ENCODE measurements at regions of chr12 and their contacts with region 1.

Region 1: DNA sequence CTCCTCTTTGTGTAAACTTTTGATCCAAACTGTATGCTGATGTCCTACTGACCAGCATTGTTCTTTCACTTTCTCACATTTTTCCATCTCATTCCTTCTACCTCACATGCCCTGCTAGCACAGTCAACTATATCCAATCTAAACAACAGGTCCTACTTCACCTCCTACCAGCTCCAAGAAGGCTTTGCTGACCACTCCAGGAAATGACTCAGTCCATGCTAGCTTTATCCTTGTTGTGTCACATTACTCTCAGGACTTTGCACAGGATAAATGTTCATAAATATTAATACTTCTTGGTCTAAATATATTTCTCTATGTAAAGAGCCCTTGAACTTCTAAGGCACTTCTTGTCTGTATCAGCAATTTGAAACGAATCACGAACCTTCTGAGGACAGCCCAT is 64.9 kb upstream of the PCED1B start:
- DNase-seq: peak; percentile 96
- ATAC-seq: peak; percentile 97
- H3K4me3 ChIP-seq: peak overlapping the region; percentile 11; the same call in 1 of the 2 replicates
- H3K27ac ChIP-seq: no peak overlapping the region; the same call in 1 of the 2 replicates
- H3K4me1 ChIP-seq: peaks cover 12% of the 10 kb centered on the region
- H3K27me3 ChIP-seq: no peaks in the 10 kb centered on the region
- CTCF ChIP-seq: no peak
- POLR2A ChIP-seq: no peak
- RAD21 ChIP-seq: no peak

Region 2: GRCh38 chr12:46831335-46832129 is 182.9 kb before region 1 on chr12:
- CTCF ChIA-PET with region 1: no interaction called
- POLR2A ChIA-PET with region 1: no interaction called
- dilution Hi-C with region 1: no loop called
- in situ Hi-C with region 1: no loop called
- intact Hi-C with region 1: loop called (anchors 10 kb)
- DNase-seq: no peak
- ATAC-seq: peak; percentile 84
- H3K4me3 ChIP-seq: peak overlapping the region; percentile 14
- H3K27ac ChIP-seq: no peak overlapping the region
- H3K4me1 ChIP-seq: no peaks in the 10 kb centered on the region
- H3K27me3 ChIP-seq: peaks cover 17% of the 10 kb centered on the region
- CTCF ChIP-seq: no peak
- POLR2A ChIP-seq: no peak
- RAD21 ChIP-seq: no peak

Region 3: DNA sequence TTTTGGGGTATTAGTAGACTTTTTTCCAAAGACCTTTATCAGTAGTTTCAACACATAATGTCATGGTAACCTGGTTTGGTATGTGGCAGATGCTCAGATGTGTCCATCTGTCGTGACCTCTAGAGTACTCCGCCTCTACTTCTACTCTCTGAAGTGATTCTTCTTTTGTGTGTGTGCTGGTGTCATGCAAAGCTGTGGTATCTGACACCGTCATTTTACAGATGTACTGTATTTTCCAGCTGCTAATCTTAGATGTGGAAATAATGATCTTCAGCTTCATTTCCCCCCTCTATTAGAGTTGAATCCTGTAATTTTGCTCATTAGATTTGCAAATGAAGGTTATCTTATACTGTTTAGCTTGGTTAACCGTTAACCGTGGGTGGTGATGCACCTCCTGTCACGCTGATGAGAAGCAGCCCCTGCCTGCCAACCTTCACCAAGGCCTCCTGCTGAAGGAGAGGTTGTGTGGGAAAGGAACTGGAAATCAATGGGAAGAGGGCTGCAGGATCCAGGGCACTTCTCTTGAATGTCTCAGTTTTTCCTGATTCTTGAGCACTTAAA is 287.7 kb after region 1 on chr12:
- CTCF ChIA-PET with region 1: no interaction called
- POLR2A ChIA-PET with region 1: no interaction called
- dilution Hi-C with region 1: no loop called
- in situ Hi-C with region 1: no loop called
- intact Hi-C with region 1: no loop called
- DNase-seq: no peak
- ATAC-seq: no peak
- H3K4me3 ChIP-seq: no peak overlapping the region
- H3K27ac ChIP-seq: no peak overlapping the region
- H3K4me1 ChIP-seq: peaks cover 7% of the 10 kb centered on the region
- H3K27me3 ChIP-seq: no peaks in the 10 kb centered on the region
- CTCF ChIP-seq: no peak
- POLR2A ChIP-seq: no peak
- RAD21 ChIP-seq: no peak

Measured in IMR-90 (cell line).